Esophagus muscularis mucosa (tissue), 4 donors: ENCODE measurements at regions of chr12 and their contacts with region 1.

Region 1: DNA sequence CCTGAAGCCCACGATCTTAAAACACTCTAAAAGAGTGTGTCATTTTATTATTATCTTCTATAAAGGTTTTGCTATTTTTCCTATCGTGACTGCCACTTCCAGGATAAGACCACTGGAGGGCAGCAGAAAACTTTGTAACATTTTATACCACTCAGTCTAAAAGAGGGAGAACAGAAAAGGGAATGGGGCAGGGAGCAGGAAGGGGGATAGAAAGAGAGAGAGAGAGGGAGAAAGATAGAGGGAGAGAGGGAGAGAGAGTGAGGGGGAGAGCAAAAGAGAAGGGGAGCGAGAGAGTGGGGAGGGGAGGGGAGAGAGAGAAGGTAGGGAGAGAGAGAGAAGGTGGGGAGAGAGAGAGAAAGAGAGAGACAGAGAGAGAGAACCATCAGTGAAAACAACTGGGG is 2.0 kb upstream of the ART4 start:
- DNase-seq: no peak
- H3K4me3 ChIP-seq: no peak overlapping the region
- H3K27ac ChIP-seq: peak overlapping the region; percentile 8 to 60 (median 42)
- H3K4me1 ChIP-seq: peaks cover 42 to 72% (median 55%) of the 10 kb centered on the region in 4 donors
- H3K27me3 ChIP-seq: no peaks in the 10 kb centered on the region
- CTCF ChIP-seq: peak; percentile 76 to 86 (median 83)
- EP300 ChIP-seq: no peak
- POLR2A ChIP-seq: no peak

Region 2: DNA sequence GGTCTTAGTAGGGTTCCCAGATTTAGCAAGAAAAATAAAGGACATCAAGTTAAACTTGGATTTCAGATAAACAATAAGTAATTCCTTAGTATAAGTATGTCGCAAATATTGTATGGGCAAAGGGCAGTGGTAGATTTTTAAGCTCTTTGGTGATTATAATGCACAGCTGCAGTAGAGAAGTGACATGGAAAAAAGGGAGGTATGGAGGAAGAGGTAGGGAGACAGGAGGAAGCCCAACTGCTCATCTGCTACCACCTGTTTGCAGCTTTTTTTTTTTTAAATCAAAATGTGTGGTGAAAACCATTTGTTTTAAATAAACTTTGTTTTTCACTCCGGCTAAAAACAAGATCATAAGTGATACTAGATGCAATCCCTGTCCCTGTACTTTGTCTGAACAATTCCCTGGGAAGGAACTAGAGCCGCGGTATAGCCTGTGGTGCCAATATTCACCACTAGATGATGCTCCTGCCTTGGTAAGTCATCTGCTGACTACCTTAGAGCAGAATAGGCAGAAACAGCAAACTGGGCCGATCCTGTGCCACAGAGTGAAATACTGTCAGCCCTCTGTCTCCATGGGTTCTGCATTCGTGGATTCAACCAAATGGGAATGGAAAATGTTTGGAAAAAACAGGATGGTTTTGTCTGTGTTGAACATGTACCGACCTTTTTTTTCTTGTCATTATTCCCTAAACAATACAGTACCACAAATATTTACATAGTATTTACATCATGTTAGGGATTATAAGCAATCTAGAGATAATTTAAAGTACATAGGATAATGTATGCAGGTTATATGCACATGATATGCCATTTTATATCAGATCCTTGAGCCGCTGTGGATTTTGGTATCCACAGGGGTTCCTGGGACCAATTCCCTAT is 215.3 kb before region 1 on chr12:
- intact Hi-C with region 1: loop called (anchors 5 kb)
- DNase-seq: no peak
- H3K4me3 ChIP-seq: no peak overlapping the region
- H3K27ac ChIP-seq: no peak overlapping the region
- H3K4me1 ChIP-seq: no peaks in the 10 kb centered on the region
- H3K27me3 ChIP-seq: no peaks in the 10 kb centered on the region
- CTCF ChIP-seq: peak; percentile 93 to 98 (median 95)
- EP300 ChIP-seq: no peak
- POLR2A ChIP-seq: no peak

Region 3: GRCh38 chr12:14885718-14886221 is 40.4 kb after region 1 on chr12 and contains the start of gene MGP:
- intact Hi-C with region 1: loop called (anchors 5 kb)
- DNase-seq: peak; percentile 94
- H3K4me3 ChIP-seq: peak within 1 kb of the TSS; percentile 49 to 63 (median 60)
- H3K27ac ChIP-seq: peak within 1 kb of the TSS; percentile 81 to 87 (median 86)
- H3K4me1 ChIP-seq: peaks cover 16 to 48% (median 37%) of the 10 kb centered on the region in 4 donors
- H3K27me3 ChIP-seq: no peaks in the 10 kb centered on the region
- CTCF ChIP-seq: no peak
- EP300 ChIP-seq: no peak
- POLR2A ChIP-seq: peak; percentile 46
- total RNA-seq, gene MGP: 604 to 929 (median 711) TPM

Region 4: DNA sequence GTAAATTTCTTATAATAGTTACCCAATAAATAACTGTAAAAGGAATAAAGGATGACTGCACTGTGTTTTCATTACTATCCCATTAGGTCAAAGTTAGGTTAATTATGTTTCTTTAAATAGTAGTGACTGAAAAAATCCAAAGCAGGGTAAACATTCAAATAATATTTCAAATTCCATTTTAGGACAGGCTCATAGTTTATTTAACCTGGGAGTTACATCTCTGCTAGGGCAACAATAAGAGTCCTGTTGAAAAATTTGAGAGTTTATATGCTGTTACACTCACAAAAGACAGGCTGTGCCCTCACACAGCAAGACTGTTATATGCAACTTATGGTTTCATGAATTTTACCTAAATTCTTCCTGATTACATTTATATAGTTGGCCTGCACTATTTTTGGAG is 84.9 kb after region 1 on chr12:
- intact Hi-C with region 1: loop called (anchors 5 kb)
- DNase-seq: no peak
- H3K4me3 ChIP-seq: no peak overlapping the region
- H3K27ac ChIP-seq: peak overlapping the region in 3 of 4 donors; percentile 33 to 66 (median 40)
- H3K4me1 ChIP-seq: peaks cover 12 to 40% (median 33%) of the 10 kb centered on the region in 4 donors
- H3K27me3 ChIP-seq: no peaks in the 10 kb centered on the region
- CTCF ChIP-seq: peak; percentile 45 to 56 (median 47)
- EP300 ChIP-seq: no peak
- POLR2A ChIP-seq: no peak

Region 5: GRCh38 chr12:14995583-14996425 is 150.5 kb after region 1 on chr12:
- intact Hi-C with region 1: loop called (anchors 1 kb)
- DNase-seq: no peak
- H3K4me3 ChIP-seq: no peak overlapping the region
- H3K27ac ChIP-seq: peak overlapping the region; percentile 47 to 68 (median 56)
- H3K4me1 ChIP-seq: peaks cover 6 to 38% (median 29%) of the 10 kb centered on the region in 4 donors
- H3K27me3 ChIP-seq: no peaks in the 10 kb centered on the region
- CTCF ChIP-seq: peak; percentile 64 to 76 (median 69)
- EP300 ChIP-seq: no peak
- POLR2A ChIP-seq: no peak

Region 6: GRCh38 chr12:15151161-15152120 is 306.1 kb after region 1 on chr12:
- intact Hi-C with region 1: loop called (anchors 10 kb)
- DNase-seq: no peak
- H3K4me3 ChIP-seq: no peak overlapping the region
- H3K27ac ChIP-seq: peak overlapping the region in 2 of 4 donors; percentile 22 to 33
- H3K4me1 ChIP-seq: peaks cover 12 to 53% (median 44%) of the 10 kb centered on the region in 4 donors
- H3K27me3 ChIP-seq: no peaks in the 10 kb centered on the region
- CTCF ChIP-seq: peak; percentile 56 to 65 (median 65)
- EP300 ChIP-seq: no peak
- POLR2A ChIP-seq: no peak

Region 7: DNA sequence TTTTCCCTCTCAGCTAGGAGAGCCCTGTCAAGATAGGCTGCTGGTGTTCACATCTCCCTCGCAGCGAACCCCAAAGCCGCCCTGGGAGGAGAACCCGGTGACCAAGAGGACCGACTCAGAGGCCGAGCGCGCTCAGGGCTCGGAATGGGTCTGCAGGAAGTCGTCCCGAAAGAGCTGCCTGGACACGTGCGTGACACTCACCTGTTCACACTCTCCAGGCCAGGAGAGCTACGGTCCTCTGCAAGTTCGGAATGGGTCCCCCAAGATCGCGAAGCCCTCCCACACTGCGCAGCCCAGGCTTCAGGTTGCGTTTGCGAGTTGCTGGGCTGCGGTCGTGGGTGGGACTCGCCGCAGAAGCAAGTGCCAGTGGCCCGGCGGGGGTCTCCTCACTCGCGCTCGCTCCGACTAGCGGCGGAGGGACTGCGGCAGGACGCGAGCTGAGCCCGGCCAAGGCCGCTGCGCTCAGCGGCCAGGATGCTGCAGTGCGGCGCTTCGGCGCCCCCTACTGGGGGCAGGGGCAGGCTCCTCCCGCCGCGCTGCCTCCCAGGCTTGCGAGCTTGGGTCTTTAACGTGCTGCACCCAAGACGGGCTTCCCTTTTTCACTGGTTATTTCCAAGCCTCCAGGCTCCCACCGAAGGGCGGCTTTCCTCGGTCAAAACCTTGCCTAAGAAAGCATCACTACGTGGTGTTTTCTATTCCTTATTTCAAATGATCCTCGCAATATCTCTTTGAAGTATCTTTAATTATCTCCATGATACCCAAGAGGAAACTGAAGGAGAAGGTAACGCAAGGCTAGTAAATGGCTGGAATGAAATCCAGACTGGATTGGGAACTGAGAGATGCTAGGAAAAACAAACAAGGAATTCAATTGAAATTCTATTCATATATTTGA is 375.9 kb after region 1 on chr12 and contains the start of gene RERG:
- intact Hi-C with region 1: loop called (anchors 5 kb)
- DNase-seq: no peak
- H3K4me3 ChIP-seq: peak within 1 kb of the TSS; percentile 54 to 70 (median 60)
- H3K27ac ChIP-seq: peak within 1 kb of the TSS; percentile 60 to 66 (median 63)
- H3K4me1 ChIP-seq: peaks cover 11 to 19% (median 14%) of the 10 kb centered on the region in 4 donors
- H3K27me3 ChIP-seq: peaks cover 0 to 4% (median 0%) of the 10 kb centered on the region in 4 donors
- CTCF ChIP-seq: peak; percentile 91 to 100 (median 99)
- EP300 ChIP-seq: no peak
- POLR2A ChIP-seq: no peak
- total RNA-seq, gene RERG: 5.0 to 15.4 (median 12.7) TPM